Sigmoid colon (tissue), 7 donors: ENCODE measurements at regions of chr20 and their contacts with region 1.

Region 1: GRCh38 chr20:324177-325044 is 941 bp upstream of the SOX12 start:
- DNase-seq: peak; percentile 94
- H3K4me3 ChIP-seq: peak overlapping the region; percentile 62 to 81 (median 64)
- H3K27ac ChIP-seq: peak overlapping the region; percentile 90 to 97 (median 96)
- H3K4me1 ChIP-seq: peaks cover 0 to 42% (median 30%) of the 10 kb centered on the region in 4 donors
- H3K27me3 ChIP-seq: no peaks in the 10 kb centered on the region
- CTCF ChIP-seq: peak in 3 of 4 experiments; percentile 15 to 25 (median 24)
- EP300 ChIP-seq: no peak
- POLR2A ChIP-seq: peak; percentile 52 to 53

Region 2: GRCh38 chr20:290084-290831 is 34.2 kb before region 1 on chr20 and contains the start of gene C20orf96:
- intact Hi-C with region 1: loop called (anchors 1 kb)
- DNase-seq: peak; percentile 95
- H3K4me3 ChIP-seq: peak within 1 kb of the TSS; percentile 48 to 72 (median 62)
- H3K27ac ChIP-seq: peak within 1 kb of the TSS; percentile 80 to 87 (median 86)
- H3K4me1 ChIP-seq: peaks cover 0 to 18% (median 10%) of the 10 kb centered on the region in 4 donors
- H3K27me3 ChIP-seq: no peaks in the 10 kb centered on the region
- CTCF ChIP-seq: peak in 3 of 4 experiments; percentile 23 to 57 (median 42)
- EP300 ChIP-seq: no peak
- POLR2A ChIP-seq: no peak
- total RNA-seq, gene C20orf96: 2.1 to 6.9 (median 3.1) TPM

Region 3: DNA sequence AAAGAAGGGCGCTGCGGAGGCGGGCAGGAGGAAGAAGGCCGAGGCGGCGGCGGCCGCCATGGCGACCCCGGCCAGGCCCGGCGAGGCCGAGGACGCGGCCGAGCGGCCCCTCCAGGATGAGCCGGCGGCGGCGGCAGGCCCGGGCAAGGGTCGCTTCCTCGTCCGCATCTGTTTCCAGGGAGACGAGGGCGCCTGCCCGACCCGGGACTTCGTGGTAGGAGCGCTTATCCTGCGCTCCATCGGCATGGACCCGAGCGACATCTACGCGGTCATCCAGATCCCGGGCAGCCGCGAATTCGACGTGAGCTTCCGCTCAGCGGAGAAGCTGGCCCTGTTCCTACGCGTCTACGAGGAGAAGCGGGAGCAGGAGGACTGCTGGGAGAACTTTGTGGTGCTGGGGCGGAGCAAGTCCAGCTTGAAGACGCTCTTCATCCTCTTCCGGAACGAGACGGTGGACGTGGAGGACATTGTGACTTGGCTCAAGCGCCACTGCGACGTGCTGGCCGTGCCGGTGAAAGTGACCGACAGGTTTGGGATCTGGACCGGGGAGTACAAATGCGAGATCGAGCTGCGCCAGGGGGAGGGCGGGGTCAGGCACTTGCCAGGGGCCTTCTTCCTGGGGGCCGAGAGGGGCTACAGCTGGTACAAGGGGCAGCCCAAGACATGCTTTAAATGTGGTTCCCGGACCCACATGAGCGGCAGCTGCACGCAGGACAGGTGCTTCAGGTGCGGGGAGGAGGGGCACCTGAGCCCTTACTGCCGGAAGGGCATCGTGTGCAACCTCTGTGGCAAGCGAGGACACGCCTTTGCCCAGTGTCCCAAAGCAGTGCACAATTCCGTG is 26.3 kb before region 1 on chr20:
- intact Hi-C with region 1: loop called (anchors 1 kb)
- DNase-seq: peak; percentile 84
- H3K4me3 ChIP-seq: peak overlapping the region; percentile 73 to 95 (median 80)
- H3K27ac ChIP-seq: peak overlapping the region; percentile 94 to 98 (median 97)
- H3K4me1 ChIP-seq: peaks cover 0 to 45% (median 43%) of the 10 kb centered on the region in 4 donors
- H3K27me3 ChIP-seq: no peaks in the 10 kb centered on the region
- CTCF ChIP-seq: no peak
- EP300 ChIP-seq: no peak
- POLR2A ChIP-seq: peak in 1 of 2 donors; percentile 8

Region 4: DNA sequence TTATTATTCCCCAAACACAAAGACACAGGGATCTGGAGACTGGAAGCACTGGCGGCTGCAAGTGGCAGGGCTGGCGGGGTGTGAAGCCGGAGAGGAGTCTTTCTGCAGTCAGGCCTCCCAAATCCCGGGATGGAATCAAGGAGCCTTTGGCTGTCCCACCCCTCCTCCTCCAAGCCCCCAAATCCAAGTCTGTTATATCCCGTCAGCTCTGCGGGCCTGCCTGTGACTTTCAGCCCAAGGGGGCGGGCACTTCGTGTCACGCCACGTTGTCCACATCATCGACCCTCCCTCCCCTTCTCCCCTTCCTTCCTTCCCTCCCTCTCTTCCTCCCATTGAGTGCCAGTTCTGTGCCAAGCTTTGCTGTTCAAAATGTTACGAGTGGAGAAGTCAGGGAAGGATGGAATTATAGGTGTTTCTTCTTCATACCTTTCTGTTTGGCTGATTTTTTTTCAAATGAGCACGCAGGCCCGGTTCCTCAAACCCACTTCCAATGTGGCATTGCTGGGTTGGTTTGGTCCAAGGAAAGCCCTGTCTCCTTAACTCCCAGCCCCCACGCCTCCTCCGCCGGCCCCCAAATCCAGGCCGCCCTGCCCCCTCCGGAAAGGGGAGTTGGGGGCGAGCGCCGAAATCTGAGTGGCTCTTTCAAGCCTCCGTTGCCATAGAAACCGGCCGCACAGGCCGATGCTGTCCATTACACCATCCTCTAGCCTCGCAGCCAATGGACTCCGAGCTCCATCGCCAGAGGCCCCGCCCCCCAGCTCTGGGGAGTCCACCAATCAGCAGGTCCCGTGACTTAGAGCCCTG is 14.4 kb before region 1 on chr20:
- intact Hi-C with region 1: loop called (anchors 2 kb)
- DNase-seq: peak; percentile 99
- H3K4me3 ChIP-seq: peak overlapping the region; percentile 22 to 57 (median 48)
- H3K27ac ChIP-seq: peak overlapping the region; percentile 84 to 87 (median 86)
- H3K4me1 ChIP-seq: peaks cover 0 to 20% (median 19%) of the 10 kb centered on the region in 4 donors
- H3K27me3 ChIP-seq: no peaks in the 10 kb centered on the region
- CTCF ChIP-seq: no peak
- EP300 ChIP-seq: no peak
- POLR2A ChIP-seq: no peak

Region 5: DNA sequence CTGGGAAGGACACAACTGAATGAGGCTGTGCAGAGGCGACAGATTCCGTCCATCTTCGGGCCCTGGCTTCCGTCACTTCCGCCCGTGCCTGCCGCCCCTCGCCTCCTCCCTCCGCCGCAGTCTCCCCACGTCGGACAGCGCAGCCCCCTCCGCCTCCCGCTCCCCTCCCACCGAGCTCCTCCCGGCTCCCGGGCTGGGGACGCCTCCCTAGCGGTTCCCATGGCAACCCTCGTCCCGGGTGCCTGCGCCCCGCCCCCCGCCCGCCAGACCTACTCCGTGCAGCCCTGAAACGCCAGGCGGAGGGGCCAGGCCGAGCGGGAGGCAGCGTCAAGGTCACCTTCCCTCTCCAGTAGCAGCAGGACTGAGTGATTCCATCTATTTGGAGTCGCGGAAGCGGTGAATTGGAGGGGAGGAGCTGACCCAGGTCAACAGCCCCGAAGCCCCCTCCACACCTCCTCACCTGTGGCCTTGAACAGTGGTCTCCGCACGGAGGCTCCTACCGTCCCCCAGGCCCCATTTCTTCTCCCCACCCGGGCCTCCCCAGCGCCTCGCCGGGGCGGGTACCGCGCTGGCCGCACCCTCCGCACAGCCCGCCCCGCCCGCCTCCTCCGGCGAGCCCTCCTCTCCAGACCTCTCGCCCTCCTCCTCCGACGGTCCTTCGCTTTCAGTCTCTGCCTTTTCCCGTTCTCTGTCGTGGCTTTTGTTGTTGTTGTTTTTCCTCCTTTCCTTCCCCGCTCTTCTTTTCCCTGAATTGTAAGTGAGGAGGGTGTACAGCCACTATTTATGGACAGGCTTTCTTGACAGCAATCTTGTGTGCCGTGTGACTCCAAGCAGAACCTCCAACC is 23.5 kb after region 1 on chr20:
- intact Hi-C with region 1: loop called (anchors 2 kb)
- DNase-seq: peak; percentile 98
- H3K4me3 ChIP-seq: peak overlapping the region; percentile 72 to 82 (median 79)
- H3K27ac ChIP-seq: peak overlapping the region; percentile 94 to 98 (median 96)
- H3K4me1 ChIP-seq: peaks cover 0 to 28% (median 19%) of the 10 kb centered on the region in 4 donors
- H3K27me3 ChIP-seq: no peaks in the 10 kb centered on the region
- CTCF ChIP-seq: no peak
- EP300 ChIP-seq: peak in 1 of 4 donors; percentile 46
- POLR2A ChIP-seq: peak; percentile 48

Region 6: DNA sequence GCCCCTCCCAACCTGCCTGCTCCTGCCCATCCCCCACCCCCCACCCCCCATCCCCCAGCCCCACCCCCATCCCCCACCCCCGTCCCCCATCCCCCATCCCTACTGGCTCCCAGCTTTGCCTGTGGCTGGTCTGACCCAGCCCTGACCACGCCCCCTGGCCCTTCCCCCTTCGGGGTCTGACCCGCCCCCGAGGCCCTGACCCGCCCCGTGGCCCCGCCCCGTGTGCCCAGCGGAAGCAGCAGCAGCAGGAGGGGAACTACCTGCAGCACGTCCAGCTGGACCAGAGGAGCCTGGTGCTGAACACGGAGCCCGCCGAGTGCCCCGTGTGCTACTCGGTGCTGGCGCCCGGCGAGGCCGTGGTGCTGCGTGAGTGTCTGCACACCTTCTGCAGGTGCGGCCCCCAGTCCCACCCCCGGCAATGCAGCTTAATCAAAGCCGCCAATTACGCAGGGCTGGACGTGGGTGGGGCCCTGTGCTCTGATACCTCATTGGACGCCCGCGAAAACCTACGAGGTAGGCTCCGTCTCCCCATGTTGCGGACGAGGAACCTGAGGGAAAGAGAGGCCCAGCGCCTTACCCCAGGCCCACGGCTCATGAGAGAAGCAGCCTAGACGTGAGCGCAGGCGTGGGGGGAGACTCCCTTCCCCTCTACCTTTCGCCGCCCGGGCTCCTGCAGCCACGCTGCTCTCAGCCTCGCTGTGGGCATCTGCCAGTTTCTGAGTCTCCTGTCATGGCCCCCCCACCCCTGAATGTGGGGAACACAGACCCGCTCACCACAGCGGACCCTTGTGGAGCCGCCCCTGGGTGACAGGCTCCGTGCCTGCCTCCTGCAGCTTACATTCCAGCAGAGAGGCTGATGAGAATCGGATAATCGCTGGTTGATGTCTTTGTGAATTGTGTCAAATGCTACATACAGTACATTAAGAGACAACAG is 96.5 kb after region 1 on chr20:
- intact Hi-C with region 1: no loop called
- DNase-seq: no peak
- H3K4me3 ChIP-seq: no peak overlapping the region
- H3K27ac ChIP-seq: no peak overlapping the region
- H3K4me1 ChIP-seq: no peaks in the 10 kb centered on the region
- H3K27me3 ChIP-seq: no peaks in the 10 kb centered on the region
- CTCF ChIP-seq: no peak
- EP300 ChIP-seq: no peak
- POLR2A ChIP-seq: no peak

Region 7: GRCh38 chr20:444862-445426 is 120.5 kb after region 1 on chr20:
- intact Hi-C with region 1: no loop called
- DNase-seq: no peak
- H3K4me3 ChIP-seq: no peak overlapping the region
- H3K27ac ChIP-seq: peak overlapping the region in 1 of 4 donors; percentile 1
- H3K4me1 ChIP-seq: peaks cover 0 to 15% (median 5%) of the 10 kb centered on the region in 4 donors
- H3K27me3 ChIP-seq: no peaks in the 10 kb centered on the region
- CTCF ChIP-seq: no peak
- EP300 ChIP-seq: no peak
- POLR2A ChIP-seq: no peak